ENCODE measurements at regions of chr10 and their contacts with region 1.

Region 1: GRCh38 chr10:86755740-86756510 is 494 bp upstream of the BMPR1A start:
- DNase-seq: peak; percentile 61
- H3K4me3 ChIP-seq: peak overlapping the region; percentile 82 to 91
- H3K27ac ChIP-seq: peak overlapping the region; percentile 95 to 96
- H3K4me1 ChIP-seq: peaks cover 9% of the 10 kb centered on the region
- H3K27me3 ChIP-seq: no peaks in the 10 kb centered on the region
- CTCF ChIP-seq: no peak
- POLR2A ChIP-seq: peak; percentile 61

Region 2: DNA sequence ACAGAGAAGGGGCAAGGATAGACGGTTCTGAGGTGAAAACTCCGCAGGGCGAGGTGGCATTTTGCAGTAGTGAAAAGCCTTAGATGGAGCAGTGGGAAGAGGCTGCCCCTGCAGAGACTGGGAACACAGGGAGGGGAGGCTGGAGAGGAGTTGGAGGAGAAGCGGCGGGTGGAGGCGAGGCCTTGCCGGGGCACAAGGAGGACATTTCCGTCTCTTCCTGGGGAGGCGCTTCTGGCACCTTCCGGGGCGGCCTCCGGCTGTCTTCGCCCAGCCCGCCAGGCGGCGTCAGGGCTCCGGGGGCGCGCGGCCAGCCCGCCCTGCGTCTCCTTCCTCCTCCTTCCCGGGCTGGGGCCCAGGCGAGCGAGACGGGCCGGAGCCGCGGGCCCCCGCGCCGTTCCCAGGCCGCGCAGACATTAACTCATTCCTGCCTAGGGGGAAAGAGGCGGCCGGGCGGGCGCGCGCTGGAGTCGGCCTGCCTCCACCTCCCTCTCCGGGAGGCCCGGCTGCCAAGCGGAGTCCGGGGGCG is 44.9 kb before region 1 on chr10:
- intact Hi-C with region 1: loop called (anchors 1 kb)
- DNase-seq: peak; percentile 84
- H3K4me3 ChIP-seq: peak overlapping the region; percentile 81 to 86
- H3K27ac ChIP-seq: peak overlapping the region; percentile 96 to 97
- H3K4me1 ChIP-seq: no peaks in the 10 kb centered on the region
- H3K27me3 ChIP-seq: no peaks in the 10 kb centered on the region
- CTCF ChIP-seq: peak; percentile 81 to 98 (median 91)
- POLR2A ChIP-seq: peak; percentile 72

Region 3: GRCh38 chr10:86733260-86733671 is 22.7 kb before region 1 on chr10:
- intact Hi-C with region 1: loop called (anchors 2 kb)
- DNase-seq: no peak
- H3K4me3 ChIP-seq: no peak overlapping the region
- H3K27ac ChIP-seq: peak overlapping the region; percentile 68 to 73
- H3K4me1 ChIP-seq: no peaks in the 10 kb centered on the region
- H3K27me3 ChIP-seq: no peaks in the 10 kb centered on the region
- CTCF ChIP-seq: no peak
- POLR2A ChIP-seq: no peak

Region 4: DNA sequence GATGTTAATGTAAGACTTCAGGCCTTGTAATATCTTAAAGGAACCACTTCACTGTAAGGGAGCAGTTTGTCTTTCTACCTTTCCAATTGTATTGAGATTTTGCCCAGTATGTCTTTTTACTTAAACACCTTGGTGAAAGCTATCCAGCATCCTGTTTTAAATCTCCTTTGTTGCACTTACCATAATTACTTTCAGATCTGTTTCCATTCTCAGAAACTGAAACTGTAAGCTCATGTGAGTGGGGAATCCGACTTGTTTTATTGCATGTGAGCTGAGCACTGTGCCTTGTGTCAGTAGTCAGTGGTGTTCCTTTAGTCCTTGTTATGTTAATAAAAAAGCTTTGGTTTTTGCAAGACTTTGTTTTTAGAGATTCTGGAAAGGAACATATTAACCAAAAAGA is 42.7 kb after region 1 on chr10:
- intact Hi-C with region 1: loop called (anchors 5 kb)
- DNase-seq: no peak
- H3K4me3 ChIP-seq: no peak overlapping the region
- H3K27ac ChIP-seq: no peak overlapping the region
- H3K4me1 ChIP-seq: no peaks in the 10 kb centered on the region
- H3K27me3 ChIP-seq: no peaks in the 10 kb centered on the region
- CTCF ChIP-seq: no peak
- POLR2A ChIP-seq: no peak

Region 5: DNA sequence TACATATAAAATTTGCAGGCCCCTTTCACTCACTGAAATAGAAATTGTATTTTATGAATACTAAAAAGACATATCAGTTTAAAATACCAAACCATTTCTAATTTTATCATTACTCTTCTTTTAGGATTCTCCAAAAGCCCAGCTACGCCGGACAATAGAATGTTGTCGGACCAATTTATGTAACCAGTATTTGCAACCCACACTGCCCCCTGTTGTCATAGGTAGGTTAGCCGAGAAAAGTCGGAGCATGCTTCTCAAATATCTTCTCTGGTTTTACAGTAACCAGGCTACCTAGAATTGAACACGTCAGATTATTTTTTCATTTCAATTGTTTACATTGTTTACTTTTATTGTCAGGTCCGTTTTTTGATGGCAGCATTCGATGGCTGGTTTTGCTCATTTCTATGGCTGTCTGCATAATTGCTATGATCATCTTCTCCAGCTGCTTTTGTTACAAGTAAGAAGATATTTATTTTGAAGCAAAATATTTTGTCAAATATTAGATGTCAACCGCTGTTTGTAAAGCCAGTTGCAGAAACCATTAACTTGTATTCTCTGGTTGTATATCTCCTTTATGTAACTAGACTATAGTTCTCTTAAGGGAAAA is 143.8 kb after region 1 on chr10:
- intact Hi-C with region 1: loop called (anchors 5 kb)
- DNase-seq: peak; percentile 78
- H3K4me3 ChIP-seq: no peak overlapping the region
- H3K27ac ChIP-seq: peak overlapping the region in 1 of 2 donors; percentile 18
- H3K4me1 ChIP-seq: peaks cover 8% of the 10 kb centered on the region
- H3K27me3 ChIP-seq: no peaks in the 10 kb centered on the region
- CTCF ChIP-seq: peak; percentile 37 to 85 (median 74)
- POLR2A ChIP-seq: no peak